GM10248 (cell line): ENCODE measurements at regions of chr1 and their contacts with region 1.

Region 1: GRCh38 chr1:208652296-208653160 is 408.3 kb upstream of the PLXNA2 start:
- DNase-seq: peak; percentile 57
- CTCF ChIP-seq: peak; percentile 83

Region 2: GRCh38 chr1:208668991-208669390 is 16.5 kb after region 1 on chr1:
- CTCF ChIA-PET with region 1: interaction called, 13 read pairs
- POLR2A ChIA-PET with region 1: no interaction called
- DNase-seq: no peak
- CTCF ChIP-seq: no peak

Region 3: GRCh38 chr1:209207701-209208286 is 555.3 kb after region 1 on chr1:
- CTCF ChIA-PET with region 1: interaction called, 42 read pairs
- POLR2A ChIA-PET with region 1: no interaction called
- DNase-seq: peak; percentile 68
- CTCF ChIP-seq: peak; percentile 80